AG04450 (cell line): ENCODE measurements at regions of chr5 and their contacts with region 1.

Region 1: GRCh38 chr5:150217873-150218692 is 28.2 kb downstream of the SLC6A7 start:
- DNase-seq: peak; percentile 69
- H3K4me3 ChIP-seq: no peak overlapping the region
- H3K27ac ChIP-seq: no peak overlapping the region
- H3K27me3 ChIP-seq: no peaks in the 10 kb centered on the region
- CTCF ChIP-seq: peak; percentile 87

Region 2: GRCh38 chr5:150129813-150130492 is 88.1 kb before region 1 on chr5:
- CTCF ChIA-PET with region 1: interaction called, 59 read pairs
- POLR2A ChIA-PET with region 1: interaction called, 3 read pairs
- DNase-seq: no peak
- H3K4me3 ChIP-seq: no peak overlapping the region
- H3K27ac ChIP-seq: no peak overlapping the region
- H3K27me3 ChIP-seq: no peaks in the 10 kb centered on the region
- CTCF ChIP-seq: peak; percentile 98

Region 3: DNA sequence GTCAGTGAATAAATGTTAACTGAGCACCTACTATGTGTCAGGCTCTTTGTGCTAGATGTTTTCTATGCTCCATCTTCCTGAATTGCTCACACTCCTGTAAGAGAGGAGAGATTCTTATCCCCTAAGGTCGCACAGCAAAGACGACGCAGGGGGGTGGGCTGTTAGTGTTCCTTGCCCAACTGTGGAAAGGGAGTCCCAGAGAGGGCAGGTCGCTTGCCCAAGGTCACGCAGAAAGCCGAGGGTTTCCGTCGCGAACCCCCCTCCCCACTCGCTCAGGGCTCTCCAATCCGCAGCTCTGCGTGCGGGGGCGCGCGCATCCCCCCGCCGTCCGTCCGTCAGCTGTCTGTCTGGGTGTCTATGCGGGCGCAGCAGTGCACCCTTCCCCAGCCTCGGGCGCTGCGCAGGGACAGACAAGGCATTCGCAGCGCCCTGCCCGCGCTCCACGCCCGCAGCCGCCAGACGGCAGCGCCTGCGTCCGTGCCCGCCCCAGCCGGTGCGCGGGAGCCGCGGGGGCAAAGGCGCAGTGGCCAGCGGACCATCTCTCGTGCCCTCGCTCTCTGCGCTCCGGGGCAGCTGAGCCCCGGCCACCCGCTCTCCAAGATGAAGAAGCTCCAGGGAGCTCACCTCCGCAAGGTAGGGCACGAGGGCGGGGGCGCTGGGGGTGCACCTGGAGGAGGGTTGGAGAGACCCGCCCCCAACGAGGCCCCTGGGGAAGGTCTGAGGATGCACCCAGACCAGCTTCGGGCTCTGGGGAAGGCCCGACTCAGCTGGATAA is 28.2 kb before region 1 on chr5 and contains the start of gene SLC6A7:
- CTCF ChIA-PET with region 1: no interaction called
- POLR2A ChIA-PET with region 1: no interaction called
- DNase-seq: no peak
- H3K4me3 ChIP-seq: no peak within 1 kb of the TSS
- H3K27ac ChIP-seq: no peak within 1 kb of the TSS
- H3K27me3 ChIP-seq: peaks cover 66% of the 10 kb centered on the region
- CTCF ChIP-seq: no peak
- polyA plus RNA-seq, gene SLC6A7: not detected in 2 replicates

Region 4: GRCh38 chr5:150751096-150751891 is 533.2 kb after region 1 on chr5:
- CTCF ChIA-PET with region 1: no interaction called
- POLR2A ChIA-PET with region 1: no interaction called
- DNase-seq: no peak
- H3K4me3 ChIP-seq: no peak overlapping the region
- H3K27ac ChIP-seq: no peak overlapping the region
- H3K27me3 ChIP-seq: no peaks in the 10 kb centered on the region
- CTCF ChIP-seq: no peak